Right ventricle myocardium superior (tissue), 1 donor: ENCODE measurements at regions of chr3 and their contacts with region 1.

Region 1: DNA sequence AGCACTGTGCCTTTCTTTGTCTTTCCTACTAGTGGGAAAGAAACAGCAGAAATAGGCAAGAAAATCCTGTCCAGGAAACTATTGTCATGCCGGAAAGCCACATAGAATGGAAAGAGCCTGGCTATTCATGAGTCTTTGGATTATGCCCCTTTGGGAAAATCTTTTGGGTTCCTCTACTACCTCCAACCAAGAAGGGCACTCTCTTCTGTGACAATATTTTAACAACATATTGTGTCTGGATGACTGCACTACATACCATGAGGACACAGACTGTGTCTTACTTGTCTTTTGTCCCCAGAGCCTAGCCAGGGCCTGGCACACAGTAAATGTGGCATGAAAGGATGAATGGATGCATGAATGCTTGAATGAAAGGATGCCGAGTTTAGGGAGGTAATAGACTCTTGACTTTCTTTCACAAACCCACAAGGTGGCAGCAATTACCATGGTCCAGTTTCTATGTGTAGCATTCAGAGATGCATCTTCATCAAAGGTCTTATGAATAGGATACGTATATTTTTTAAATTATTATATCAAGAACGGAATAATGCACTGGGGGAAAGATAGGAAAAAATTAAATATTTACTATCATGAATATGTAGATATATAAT is 30.3 kb downstream of the ARL14 start:
- DNase-seq: no peak
- ATAC-seq: peak; percentile 90

Region 2: DNA sequence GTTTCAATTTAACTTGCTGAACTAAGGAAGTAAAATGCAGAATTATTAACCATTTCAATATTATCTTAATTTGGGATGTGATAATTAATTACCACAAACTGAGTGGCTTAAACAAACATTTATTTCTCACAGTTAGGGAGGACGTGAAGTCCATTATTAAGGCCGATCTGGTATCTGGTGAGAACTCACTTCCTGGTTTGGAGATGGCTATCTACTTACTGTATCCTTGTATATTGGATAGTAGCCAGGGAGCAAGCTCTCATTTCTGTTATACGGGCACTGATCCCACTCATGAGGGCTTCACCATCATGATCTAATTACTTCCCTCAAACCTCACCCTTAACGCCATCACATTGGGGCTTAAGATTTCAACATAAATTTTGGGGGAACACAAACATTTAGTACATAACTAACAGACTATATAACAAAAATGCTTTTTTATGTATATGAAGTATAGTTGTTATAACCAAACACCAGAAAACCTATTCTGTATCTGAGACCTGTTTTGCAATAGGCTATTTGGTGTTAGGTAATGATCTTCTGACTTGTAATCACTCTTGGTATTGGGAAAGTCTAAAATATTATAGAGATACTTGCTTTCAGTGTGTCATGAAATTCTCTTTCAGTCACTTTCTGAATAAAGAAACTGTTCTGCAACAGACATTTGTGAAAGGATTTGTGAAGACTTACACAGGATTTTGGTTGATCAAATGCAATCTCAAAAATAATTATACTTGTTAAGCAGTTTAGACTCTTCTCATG is 137.2 kb before region 1 on chr3:
- intact Hi-C with region 1: no loop called
- DNase-seq: no peak
- ATAC-seq: no peak

Region 3: GRCh38 chr3:160929595-160929994 is 222.3 kb after region 1 on chr3:
- intact Hi-C with region 1: loop called (anchors 5 kb)
- DNase-seq: peak; percentile 76
- ATAC-seq: peak; percentile 95

Region 4: GRCh38 chr3:160941885-160942494 is 234.7 kb after region 1 on chr3:
- intact Hi-C with region 1: loop called (anchors 2 kb)
- DNase-seq: no peak
- ATAC-seq: peak; percentile 94

Region 5: GRCh38 chr3:161423911-161424522 is 716.7 kb after region 1 on chr3:
- intact Hi-C with region 1: loop called (anchors 10 kb)
- DNase-seq: no peak
- ATAC-seq: peak; percentile 83